ENCODE measurements at regions of chr17 and their contacts with region 1.

Region 1: DNA sequence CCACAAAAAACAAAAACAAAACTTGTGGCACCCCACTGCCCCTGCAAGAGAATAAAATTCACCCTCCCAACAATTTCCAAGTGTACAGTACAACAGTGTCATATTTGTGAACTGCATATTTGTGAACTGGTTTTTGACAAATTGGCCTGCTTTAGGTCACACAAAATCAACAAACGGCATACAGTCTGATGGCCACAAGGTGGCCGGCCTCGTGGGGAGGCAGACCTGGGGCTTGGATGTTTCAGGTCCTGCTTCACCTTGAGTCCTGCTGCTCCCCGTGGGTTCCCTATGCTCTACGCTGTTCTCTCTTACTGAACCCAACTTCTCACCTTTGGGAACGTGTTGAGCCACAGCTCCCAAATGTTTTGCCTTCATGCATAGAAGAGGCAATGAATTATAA is 102.2 kb downstream of the CDK5R1 start:
- DNase-seq: no peak
- H3K4me3 ChIP-seq: no peak overlapping the region
- H3K27ac ChIP-seq: no peak overlapping the region
- H3K4me1 ChIP-seq: no peaks in the 10 kb centered on the region
- H3K27me3 ChIP-seq: no peaks in the 10 kb centered on the region
- CTCF ChIP-seq: peak; percentile 61 to 81 (median 79)
- EP300 ChIP-seq: no peak
- POLR2A ChIP-seq: no peak
- RAD21 ChIP-seq: peak; percentile 54 to 67

Region 2: GRCh38 chr17:32575880-32576279 is 13.1 kb before region 1 on chr17:
- CTCF ChIA-PET with region 1: interaction called, 20 read pairs
- POLR2A ChIA-PET with region 1: no interaction called
- DNase-seq: no peak
- H3K4me3 ChIP-seq: no peak overlapping the region
- H3K27ac ChIP-seq: no peak overlapping the region
- H3K4me1 ChIP-seq: no peaks in the 10 kb centered on the region
- H3K27me3 ChIP-seq: no peaks in the 10 kb centered on the region
- CTCF ChIP-seq: no peak
- EP300 ChIP-seq: no peak
- POLR2A ChIP-seq: no peak
- RAD21 ChIP-seq: no peak

Region 3: GRCh38 chr17:32602396-32602795 is 13.4 kb after region 1 on chr17:
- CTCF ChIA-PET with region 1: interaction called, 15 read pairs
- POLR2A ChIA-PET with region 1: no interaction called
- DNase-seq: no peak
- H3K4me3 ChIP-seq: no peak overlapping the region
- H3K27ac ChIP-seq: no peak overlapping the region
- H3K4me1 ChIP-seq: no peaks in the 10 kb centered on the region
- H3K27me3 ChIP-seq: peaks cover 0 to 1% (median 0%) of the 10 kb centered on the region in 4 experiments; a peak in 1 of 7 replicates
- CTCF ChIP-seq: no peak
- EP300 ChIP-seq: no peak
- POLR2A ChIP-seq: no peak
- RAD21 ChIP-seq: no peak

Region 4: DNA sequence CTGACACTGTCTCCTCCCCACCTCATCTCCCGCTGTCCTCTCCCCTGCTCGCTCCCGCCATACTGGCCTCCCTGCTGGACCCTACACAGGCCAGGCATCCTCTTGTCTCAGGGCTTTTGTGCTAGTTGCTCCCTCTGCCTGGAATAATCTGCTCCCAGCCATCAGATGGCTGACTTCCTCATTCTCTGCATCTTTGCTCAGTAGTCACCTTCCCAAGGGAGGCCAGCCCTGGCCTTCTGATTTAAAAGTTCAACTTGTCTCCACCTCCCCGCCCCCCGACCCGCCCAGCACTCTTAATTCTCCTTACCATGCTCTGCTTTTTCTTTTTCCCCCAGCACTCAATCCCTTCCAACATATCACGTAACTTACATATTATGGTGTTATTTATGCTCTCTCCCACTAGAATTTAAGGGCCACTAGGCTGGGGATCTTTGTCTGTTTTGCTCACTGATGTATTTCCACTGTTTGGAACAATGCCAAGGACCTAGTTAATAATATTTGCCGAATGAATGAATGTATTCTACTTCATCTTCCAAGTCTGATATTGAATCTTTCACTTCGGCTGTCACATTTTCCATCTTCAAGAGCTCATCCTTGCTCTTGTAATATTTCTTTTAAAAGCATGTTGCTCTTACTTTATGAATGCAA is 76.1 kb after region 1 on chr17:
- CTCF ChIA-PET with region 1: no interaction called
- POLR2A ChIA-PET with region 1: no interaction called
- DNase-seq: no peak
- H3K4me3 ChIP-seq: no peak overlapping the region
- H3K27ac ChIP-seq: no peak overlapping the region; the same call in 1 of the 2 replicates
- H3K4me1 ChIP-seq: no peaks in the 10 kb centered on the region
- H3K27me3 ChIP-seq: no peaks in the 10 kb centered on the region
- CTCF ChIP-seq: no peak
- EP300 ChIP-seq: no peak
- POLR2A ChIP-seq: no peak
- RAD21 ChIP-seq: no peak

Region 5: GRCh38 chr17:32794533-32795246 is 205.7 kb after region 1 on chr17:
- CTCF ChIA-PET with region 1: no interaction called
- POLR2A ChIA-PET with region 1: no interaction called
- DNase-seq: no peak
- H3K4me3 ChIP-seq: no peak overlapping the region
- H3K27ac ChIP-seq: no peak overlapping the region
- H3K4me1 ChIP-seq: no peaks in the 10 kb centered on the region
- H3K27me3 ChIP-seq: no peaks in the 10 kb centered on the region
- CTCF ChIP-seq: no peak
- EP300 ChIP-seq: no peak
- POLR2A ChIP-seq: no peak
- RAD21 ChIP-seq: no peak

Measured in H1 (cell line).